Sciatic nerve (tissue), 2 donors: ENCODE measurements at regions of chr11 and their contacts with region 1.

Region 1: GRCh38 chr11:10784232-10785145 is 24.2 kb downstream of the EIF4G2 start:
- DNase-seq: no peak
- ATAC-seq: no peak

Region 2: GRCh38 chr11:11010624-11011127 is 226.2 kb after region 1 on chr11:
- intact Hi-C with region 1: loop called (anchors 10 kb)
- DNase-seq: no peak
- ATAC-seq: peak; percentile 77